Activated CD4-positive, alpha-beta memory T cell treated with anti-CD3 and anti-CD28 coated beads, Interleukin-2, amount 10 ng/mL, durations not matched to agents 7 days and 5 days (primary cell): ENCODE measurements at regions of chr14 and their contacts with region 1.

Region 1: DNA sequence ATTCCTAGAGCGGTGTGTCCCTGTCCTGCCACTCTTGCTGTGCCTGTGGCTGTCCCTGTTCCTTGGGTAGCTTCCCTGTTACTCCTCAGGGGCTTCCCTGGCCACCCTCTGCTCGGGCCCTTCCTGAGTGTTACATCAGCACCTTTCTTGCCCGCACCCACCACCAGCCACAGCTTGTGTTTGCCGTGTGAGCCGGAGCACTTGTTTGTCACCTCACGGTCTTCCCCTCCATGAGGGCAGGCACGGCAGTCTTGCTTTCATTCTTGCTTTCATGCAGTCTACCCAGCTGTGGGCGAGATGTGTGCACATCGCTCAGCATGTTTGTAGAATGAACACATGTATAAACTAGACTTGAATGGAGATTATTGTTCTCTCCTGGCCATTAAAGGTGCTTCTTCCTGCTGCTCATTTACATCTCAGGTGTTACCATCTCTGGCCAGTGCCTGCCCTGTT is 42.0 kb downstream of the TRAF3 start:
- DNase-seq: peak; percentile 78
- H3K4me3 Mint-ChIP-seq: peak overlapping the region; percentile 71
- H3K27ac Mint-ChIP-seq: peak overlapping the region; percentile 89
- H3K4me1 Mint-ChIP-seq: peaks cover 75% of the 10 kb centered on the region
- H3K27me3 Mint-ChIP-seq: no peaks in the 10 kb centered on the region

Region 2: GRCh38 chr14:102738756-102739494 is 80.3 kb before region 1 on chr14:
- CTCF ChIA-PET with region 1: no interaction called
- POLR2A ChIA-PET with region 1: no interaction called
- DNase-seq: no peak
- H3K4me3 Mint-ChIP-seq: no peak overlapping the region
- H3K27ac Mint-ChIP-seq: no peak overlapping the region
- H3K4me1 Mint-ChIP-seq: no peaks in the 10 kb centered on the region
- H3K27me3 Mint-ChIP-seq: no peaks in the 10 kb centered on the region

Region 3: GRCh38 chr14:102785584-102785942 is 33.6 kb before region 1 on chr14:
- CTCF ChIA-PET with region 1: no interaction called
- POLR2A ChIA-PET with region 1: interaction called, 12 read pairs
- DNase-seq: no peak
- H3K4me3 Mint-ChIP-seq: no peak overlapping the region
- H3K27ac Mint-ChIP-seq: peak overlapping the region; percentile 57
- H3K4me1 Mint-ChIP-seq: peaks cover 68% of the 10 kb centered on the region
- H3K27me3 Mint-ChIP-seq: no peaks in the 10 kb centered on the region

Region 4: DNA sequence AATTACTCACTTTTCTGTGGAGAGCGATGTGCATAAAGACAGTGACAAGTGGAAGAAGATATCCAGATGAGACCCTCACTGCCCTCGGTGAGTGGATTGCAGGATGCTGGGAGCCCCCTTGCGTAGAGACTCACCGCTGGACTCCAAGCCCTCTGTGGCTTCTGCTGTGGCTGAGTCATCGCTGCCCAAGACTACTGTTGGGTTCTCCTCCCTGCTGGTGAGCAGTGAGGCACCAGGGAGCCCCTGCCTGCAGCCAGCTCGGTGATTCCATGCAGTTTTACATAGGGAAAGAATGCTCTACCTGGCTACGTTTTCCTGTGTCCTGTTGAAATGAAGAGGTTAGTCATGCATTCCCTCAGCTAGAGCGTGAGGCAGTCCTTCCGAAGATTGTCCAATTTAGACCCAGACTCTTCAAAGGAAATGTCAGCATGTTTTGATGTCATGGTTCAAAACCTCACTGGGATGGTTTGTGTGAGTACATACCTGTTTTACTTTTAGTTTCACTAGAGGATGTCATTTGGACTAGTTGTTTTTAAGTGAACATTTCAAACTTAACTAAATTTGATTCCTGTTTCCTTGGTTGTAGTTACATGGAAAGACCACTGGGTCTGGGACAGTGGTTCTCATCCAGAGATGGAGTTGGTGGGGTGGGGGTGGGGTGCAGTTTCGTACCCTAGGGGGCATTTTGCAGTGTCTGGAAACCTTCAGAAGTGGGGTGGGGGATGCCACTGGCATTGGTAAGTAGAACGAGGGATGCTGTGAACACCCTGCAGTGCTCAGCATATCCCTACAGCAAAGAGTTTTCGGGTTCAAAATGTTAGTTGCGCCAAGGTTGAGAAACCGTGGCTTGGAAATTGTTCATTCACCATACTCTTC is 13.6 kb before region 1 on chr14:
- CTCF ChIA-PET with region 1: interaction called, 3 read pairs
- POLR2A ChIA-PET with region 1: interaction called, 10 read pairs
- DNase-seq: peak; percentile 69
- H3K4me3 Mint-ChIP-seq: peak overlapping the region; percentile 63
- H3K27ac Mint-ChIP-seq: peak overlapping the region; percentile 94
- H3K4me1 Mint-ChIP-seq: peaks cover 64% of the 10 kb centered on the region
- H3K27me3 Mint-ChIP-seq: no peaks in the 10 kb centered on the region

Region 5: DNA sequence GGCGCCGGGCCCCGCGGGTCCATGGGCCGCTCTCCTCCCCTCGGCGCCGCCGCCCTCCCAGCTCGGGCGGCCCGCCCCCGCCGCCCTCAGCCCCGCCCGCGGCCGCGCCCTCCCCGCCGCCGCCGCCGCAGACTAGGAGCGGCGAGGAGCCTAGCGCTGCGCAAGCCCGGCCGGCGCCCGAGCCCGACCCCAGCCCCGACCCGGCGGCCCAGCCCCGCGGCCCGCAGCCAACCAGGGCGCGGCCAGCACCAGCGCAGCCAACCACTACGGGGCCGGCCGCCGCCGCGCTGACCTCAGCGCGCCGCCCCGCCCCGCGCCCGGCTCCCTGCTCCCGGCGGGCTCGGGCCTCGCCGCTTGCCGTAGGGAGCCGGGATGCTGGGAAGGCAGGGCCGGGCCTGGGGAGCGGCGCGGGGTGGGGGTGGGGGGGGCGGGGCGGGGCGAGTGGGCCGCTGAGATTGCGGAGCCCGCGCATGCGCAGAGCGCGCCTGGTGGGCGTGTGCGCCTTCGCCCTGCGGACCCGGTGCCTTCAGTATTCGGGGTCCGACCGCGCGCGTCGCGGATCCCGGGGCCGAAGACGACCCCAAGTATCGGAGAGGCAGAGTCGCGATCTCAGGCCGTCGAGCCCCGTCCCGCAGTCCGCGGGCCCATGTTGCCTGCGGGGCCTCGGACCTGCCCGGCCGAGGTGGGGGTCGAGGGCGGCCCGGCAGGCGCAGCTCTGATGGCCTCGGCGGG is 238.3 kb after region 1 on chr14 and contains the start of gene CDC42BPB:
- CTCF ChIA-PET with region 1: no interaction called
- POLR2A ChIA-PET with region 1: no interaction called
- DNase-seq: peak; percentile 44
- H3K4me3 Mint-ChIP-seq: peak within 1 kb of the TSS; percentile 69
- H3K27ac Mint-ChIP-seq: no peak within 1 kb of the TSS
- H3K4me1 Mint-ChIP-seq: peaks cover 8% of the 10 kb centered on the region
- H3K27me3 Mint-ChIP-seq: peaks cover 39% of the 10 kb centered on the region
- total RNA-seq, gene CDC42BPB: 0.78 to 0.81 TPM

Region 6: DNA sequence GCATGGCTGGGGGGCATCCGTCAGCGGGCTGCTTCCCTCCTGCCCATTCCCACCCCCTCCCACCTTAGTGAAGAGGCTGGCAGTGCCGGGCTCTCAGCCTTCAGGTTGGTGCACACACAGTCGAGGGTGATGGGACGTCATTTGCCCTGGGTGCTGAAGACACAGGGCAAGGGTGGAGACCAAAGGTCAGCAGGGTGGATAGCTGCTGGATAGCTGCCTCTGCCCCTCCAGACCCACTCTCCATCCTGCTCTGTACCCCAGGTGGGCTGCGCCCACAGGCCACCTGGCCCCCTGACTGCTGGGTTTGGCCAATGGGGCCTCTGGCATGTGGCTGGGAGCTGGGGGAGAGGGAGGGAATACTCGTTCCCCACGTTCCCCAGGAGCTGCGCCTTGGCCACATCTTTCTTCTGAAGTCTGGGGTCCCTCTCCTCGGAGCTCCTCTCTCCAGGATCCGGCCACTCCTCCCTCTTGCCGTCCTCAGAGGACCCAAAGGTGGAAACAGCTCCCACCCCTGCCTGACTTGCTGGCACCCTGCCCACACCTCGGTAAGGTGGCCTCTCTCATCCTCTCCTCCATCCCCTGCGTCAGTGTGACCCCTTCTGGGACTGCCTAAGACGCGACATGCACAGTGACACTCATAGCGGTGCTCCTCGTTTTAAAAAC is 249.3 kb after region 1 on chr14:
- CTCF ChIA-PET with region 1: no interaction called
- POLR2A ChIA-PET with region 1: no interaction called
- DNase-seq: no peak
- H3K4me3 Mint-ChIP-seq: no peak overlapping the region
- H3K27ac Mint-ChIP-seq: no peak overlapping the region
- H3K4me1 Mint-ChIP-seq: no peaks in the 10 kb centered on the region
- H3K27me3 Mint-ChIP-seq: peaks cover 6% of the 10 kb centered on the region